Left ventricle myocardium inferior (tissue), 1 donor: ENCODE measurements at regions of chr1 and their contacts with region 1.

Region 1: DNA sequence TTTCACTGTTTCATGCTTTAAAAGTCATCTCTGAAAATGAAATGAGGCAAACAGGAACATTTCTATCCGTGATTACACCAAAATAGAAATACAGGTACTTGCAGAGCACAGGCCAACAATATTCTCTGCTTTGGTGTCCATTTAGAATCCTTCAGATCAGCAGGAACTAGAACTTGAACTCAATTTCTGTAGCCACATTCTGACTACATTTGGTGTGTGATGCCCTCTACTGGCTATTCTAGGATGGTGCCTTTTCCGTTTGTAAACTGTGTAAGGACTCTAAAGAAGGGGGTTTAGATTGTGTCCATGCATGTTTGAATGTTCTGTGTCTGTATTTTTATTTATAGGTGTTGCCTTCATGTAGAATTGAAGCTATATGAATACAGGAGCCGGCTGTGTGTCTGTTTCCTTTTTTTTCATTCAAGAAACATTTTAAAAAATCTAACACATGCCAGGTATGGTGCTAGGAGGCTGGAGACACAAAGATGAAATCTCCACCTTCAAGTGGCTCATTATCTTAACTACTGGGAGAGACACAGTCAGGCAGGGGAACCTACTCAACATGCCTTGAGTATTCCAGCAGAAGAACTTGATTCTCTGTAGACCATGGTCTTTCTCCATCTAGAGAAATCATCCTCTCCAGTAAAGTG is 7.6 kb upstream of the ZNF326 start:
- DNase-seq: no peak
- H3K4me3 ChIP-seq: no peak overlapping the region
- H3K27ac ChIP-seq: no peak overlapping the region
- H3K4me1 ChIP-seq: peaks cover 11% of the 10 kb centered on the region
- H3K27me3 ChIP-seq: no peaks in the 10 kb centered on the region
- CTCF ChIP-seq: peak; percentile 92

Region 2: GRCh38 chr1:89804642-89805237 is 182.6 kb before region 1 on chr1:
- intact Hi-C with region 1: loop called (anchors 2 kb)
- DNase-seq: peak; percentile 72
- H3K4me3 ChIP-seq: no peak overlapping the region
- H3K27ac ChIP-seq: no peak overlapping the region
- H3K4me1 ChIP-seq: no peaks in the 10 kb centered on the region
- H3K27me3 ChIP-seq: no peaks in the 10 kb centered on the region
- CTCF ChIP-seq: peak; percentile 95

Region 3: DNA sequence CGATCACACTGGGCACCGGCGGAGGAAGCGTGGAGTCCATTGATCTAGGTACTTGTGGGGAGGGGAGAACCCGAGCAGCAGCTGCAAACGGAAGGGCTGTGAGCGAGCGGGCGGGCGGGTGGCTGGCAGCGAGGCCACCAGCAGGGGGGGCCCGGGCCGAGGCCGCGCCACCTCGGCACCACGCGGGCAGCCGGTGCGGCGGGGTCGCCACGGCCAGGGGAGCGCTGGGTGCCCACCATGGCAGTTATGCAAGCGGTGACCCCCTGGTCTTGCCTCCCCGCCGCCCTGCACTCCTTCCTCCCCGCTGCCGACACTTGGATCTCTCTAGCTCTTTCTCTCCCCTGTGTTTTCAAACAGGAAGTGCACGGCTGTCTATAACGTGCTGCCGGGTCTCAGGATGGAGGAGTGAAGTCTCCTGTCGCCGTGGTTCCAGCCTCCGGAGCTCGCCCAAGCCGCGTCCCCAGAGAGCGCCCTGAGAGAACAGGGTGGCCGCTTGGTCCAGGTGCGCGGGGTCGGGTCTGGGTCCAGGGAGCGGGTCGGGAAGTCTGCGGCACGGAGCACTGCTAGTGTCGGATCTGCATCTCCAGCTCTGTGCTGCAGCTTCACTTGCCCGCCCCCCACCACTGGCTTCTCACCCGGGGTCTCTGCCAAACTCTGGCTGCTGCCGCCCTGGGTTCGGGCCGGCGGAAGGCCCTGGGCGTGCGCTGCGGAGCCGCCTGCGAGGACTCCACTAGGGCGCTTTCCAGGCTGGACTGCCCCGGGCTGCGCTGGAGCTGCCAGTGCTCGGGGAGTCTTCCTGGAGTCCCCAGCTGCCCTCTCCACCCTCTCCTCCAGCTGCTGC is 143.8 kb before region 1 on chr1:
- intact Hi-C with region 1: loop called (anchors 10 kb)
- DNase-seq: peak; percentile 73
- H3K4me3 ChIP-seq: peak overlapping the region; percentile 84
- H3K27ac ChIP-seq: peak overlapping the region; percentile 84
- H3K4me1 ChIP-seq: peaks cover 31% of the 10 kb centered on the region
- H3K27me3 ChIP-seq: no peaks in the 10 kb centered on the region
- CTCF ChIP-seq: peak; percentile 84

Region 4: GRCh38 chr1:89873770-89874169 is 113.5 kb before region 1 on chr1:
- intact Hi-C with region 1: no loop called
- DNase-seq: no peak
- H3K4me3 ChIP-seq: no peak overlapping the region
- H3K27ac ChIP-seq: peak overlapping the region; percentile 68
- H3K4me1 ChIP-seq: peaks cover 68% of the 10 kb centered on the region
- H3K27me3 ChIP-seq: no peaks in the 10 kb centered on the region
- CTCF ChIP-seq: no peak